ENCODE measurements at regions of chr3 and their contacts with region 1.

Region 1: DNA sequence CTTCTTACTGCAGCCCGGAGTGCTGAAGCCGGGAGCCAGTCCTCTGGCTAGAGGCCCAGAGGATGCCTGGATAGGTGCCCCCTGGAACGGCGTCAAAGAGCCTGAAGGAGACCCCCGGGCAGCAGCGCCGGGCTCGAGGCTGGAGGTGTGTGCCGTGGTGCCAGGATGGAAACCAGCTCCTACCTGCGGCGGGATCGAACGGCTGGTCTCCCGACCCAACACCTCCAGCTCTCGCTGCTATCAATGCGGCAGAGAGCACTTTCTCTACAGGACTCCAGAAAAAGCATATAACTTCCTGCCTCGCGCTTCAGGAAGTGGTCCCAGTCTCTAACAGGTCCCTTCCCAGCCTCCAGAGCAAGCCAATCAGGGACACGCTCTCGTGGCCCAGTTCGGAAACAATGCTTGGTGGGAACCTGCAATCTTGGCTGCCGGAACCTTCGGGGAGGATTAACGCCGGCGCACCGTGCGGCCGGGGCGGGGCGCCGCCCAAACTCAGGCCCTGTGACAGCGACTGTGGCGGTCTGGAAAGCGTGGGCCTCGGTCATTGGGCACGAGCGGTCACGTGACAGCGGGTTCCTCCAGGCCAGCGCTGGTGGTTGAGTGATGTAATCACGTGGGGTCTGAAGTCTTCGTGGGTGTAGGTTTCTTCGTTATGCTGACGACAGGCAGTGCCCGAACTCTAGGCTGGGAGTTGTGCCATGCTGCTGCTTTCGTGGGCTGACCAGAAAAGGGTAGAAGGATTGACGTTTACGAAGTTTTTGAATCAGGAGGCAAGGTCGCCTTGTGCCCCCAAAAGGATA is at the start of gene SLC33A1:
- DNase-seq: peak; percentile 96

Region 2: DNA sequence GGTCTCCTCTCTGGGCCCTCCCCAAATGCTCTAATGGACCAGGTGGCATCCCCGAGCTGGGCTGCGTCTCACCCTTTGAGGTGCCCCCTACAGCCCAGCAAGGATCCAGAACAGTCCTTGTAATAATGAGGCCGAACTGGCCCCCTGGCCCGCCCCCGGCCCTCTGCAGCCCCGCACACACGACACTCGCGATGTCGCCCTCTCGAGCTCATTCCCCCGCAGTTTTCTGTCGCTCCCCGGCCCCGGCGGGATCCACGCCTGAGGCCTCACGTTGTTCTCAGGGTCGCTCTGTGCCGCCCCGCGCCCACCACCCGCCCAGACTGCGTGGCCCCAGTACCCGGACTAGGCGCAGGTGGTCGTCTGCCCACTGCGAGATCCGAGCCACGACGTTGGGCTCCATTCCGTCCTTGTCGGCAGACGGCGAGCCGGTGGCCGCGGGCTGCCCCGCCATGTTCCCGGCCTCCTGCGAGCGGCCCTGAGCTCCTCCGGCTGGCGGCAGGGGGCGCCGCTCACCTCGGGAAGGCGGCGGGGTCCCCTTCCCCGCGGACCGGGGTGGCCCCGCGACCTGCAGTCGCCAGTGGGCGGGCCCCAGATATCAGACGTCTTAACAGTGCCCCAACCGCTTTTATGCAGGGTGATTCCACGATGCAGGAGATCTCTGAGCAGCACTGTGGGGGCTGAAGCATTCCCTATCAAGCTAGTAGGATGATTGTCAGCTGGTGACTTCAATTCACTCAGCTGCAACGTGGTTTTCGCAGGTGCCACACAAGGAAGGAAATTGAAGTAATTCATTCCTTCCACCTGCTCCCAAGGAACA is 48.3 kb before region 1 on chr3 and contains the start of gene C3orf33:
- CTCF ChIA-PET with region 1: interaction called, 4 read pairs
- POLR2A ChIA-PET with region 1: interaction called, 11 read pairs
- DNase-seq: peak; percentile 81

Region 3: GRCh38 chr3:155843569-155843968 is 10.8 kb before region 1 on chr3:
- CTCF ChIA-PET with region 1: no interaction called
- POLR2A ChIA-PET with region 1: no interaction called
- DNase-seq: no peak

Region 4: GRCh38 chr3:155870133-155870944 is 16.0 kb after region 1 on chr3 and contains the start of gene GMPS:
- CTCF ChIA-PET with region 1: interaction called, 4 read pairs
- POLR2A ChIA-PET with region 1: interaction called, 12 read pairs
- DNase-seq: peak; percentile 92

Region 5: DNA sequence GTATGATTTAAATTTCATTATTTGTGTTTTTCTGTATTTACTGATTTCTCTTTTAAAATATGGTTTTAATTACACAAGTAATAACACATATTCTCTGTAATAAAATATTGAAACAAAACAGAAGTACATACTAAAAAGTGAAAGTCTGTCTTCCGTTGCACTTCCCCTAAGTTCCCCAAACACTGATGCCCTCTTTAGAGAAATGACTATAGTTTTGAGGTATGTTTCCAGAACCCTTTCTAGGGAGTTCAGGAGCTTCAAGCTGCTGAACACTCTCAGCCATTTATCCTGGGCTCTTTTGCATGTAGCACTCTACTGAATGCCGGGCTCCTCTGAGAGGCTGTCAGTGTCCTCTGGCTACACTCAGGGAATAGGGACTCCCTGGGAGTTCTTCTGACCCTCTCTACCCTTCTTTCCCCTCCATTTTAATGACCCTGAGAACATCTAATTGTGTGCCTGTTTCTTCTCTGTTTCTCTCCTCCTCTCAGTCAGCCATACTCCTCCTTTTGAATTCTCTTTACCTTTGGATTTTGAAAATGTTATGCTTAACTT is 205.7 kb after region 1 on chr3:
- CTCF ChIA-PET with region 1: no interaction called
- POLR2A ChIA-PET with region 1: no interaction called
- DNase-seq: no peak

Measured in HEK293T (cell line).